ENCODE measurements at regions of chr16 and their contacts with region 1.

Region 1: DNA sequence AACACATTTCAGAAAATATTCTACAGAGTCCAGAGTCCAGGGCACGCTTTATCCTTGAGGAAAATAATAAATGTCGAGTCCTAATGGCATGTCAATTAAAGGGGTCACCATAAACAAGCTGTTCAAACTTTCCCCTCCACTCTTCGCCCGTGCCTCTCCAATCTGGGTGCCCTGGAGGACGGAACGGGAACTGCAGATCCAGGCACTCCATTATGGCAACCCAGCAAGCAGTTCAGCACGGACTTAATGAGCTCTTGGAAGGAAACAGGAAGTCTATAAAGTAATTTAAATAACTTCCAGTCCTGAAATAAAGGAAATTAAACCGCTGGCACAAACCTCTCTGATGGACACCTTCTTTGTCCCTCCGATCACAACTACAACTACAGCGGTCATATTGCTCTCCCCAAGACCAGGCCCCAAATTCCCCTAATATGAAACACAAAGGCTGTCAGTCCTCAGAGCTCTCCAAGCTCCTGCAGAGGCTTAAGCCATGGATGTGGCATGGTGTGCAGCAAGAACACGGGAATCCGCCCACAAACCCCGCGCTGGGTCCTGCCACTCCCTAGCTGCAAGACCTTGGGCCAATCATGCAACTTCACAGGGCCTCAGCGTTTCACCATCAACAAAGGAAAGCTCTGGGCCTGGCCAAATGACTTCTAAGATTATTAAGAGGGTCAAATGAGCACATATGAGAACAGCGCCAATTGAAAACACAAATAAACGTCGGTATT is 52.6 kb downstream of the ZFHX3 start:
- DNase-seq: peak; percentile 23 to 87
- H3K4me3 ChIP-seq: no peak overlapping the region
- H3K27ac ChIP-seq: no peak overlapping the region
- H3K4me1 ChIP-seq: peaks cover 2 to 11% (median 6%) of the 10 kb centered on the region in 4 experiments; a peak in 6 of 7 replicates
- H3K27me3 ChIP-seq: no peaks in the 10 kb centered on the region
- CTCF ChIP-seq: peak; percentile 48 to 81 (median 77)
- EP300 ChIP-seq: no peak
- POLR2A ChIP-seq: no peak
- RAD21 ChIP-seq: peak; percentile 35 to 48; a peak in 2 of 4 replicates

Region 2: GRCh38 chr16:72952811-72953595 is 42.3 kb before region 1 on chr16:
- CTCF ChIA-PET with region 1: interaction called, 14 read pairs
- POLR2A ChIA-PET with region 1: no interaction called
- DNase-seq: no peak
- H3K4me3 ChIP-seq: no peak overlapping the region
- H3K27ac ChIP-seq: no peak overlapping the region
- H3K4me1 ChIP-seq: peaks cover 0 to 1% (median 0%) of the 10 kb centered on the region in 4 experiments; a peak in 1 of 7 replicates
- H3K27me3 ChIP-seq: no peaks in the 10 kb centered on the region; a peak in 1 of 7 replicates
- CTCF ChIP-seq: no peak
- EP300 ChIP-seq: no peak
- POLR2A ChIP-seq: no peak
- RAD21 ChIP-seq: no peak

Region 3: DNA sequence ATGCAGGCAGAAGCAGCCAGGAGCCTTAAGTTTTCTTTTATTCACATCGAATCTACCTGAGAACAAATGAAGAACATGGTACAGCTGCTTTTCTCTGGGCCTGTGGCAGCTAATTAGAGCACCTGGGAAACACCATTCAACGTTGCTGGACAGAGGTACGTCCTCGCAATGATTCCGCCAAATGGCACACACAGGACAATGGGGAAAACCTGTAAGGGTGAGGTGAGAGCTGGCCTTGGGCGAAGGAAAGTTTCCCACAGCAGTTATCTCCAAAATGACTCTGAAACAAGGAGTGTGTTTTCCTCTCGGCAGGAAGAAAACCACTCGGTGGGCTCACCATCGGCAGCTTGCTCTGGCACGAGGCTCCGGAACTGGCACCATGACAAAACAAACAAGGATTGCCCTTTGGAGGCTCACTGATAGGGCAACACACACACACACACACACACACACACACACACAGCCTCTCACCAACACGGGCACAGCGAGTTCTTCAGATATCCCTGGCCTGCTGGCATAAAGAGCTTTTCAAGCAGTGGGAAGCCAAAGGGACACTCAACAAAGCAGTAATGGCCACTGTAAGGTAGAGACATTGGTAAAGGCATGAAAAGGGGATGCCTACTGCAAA is 21.1 kb before region 1 on chr16:
- CTCF ChIA-PET with region 1: interaction called, 86 read pairs
- POLR2A ChIA-PET with region 1: no interaction called
- DNase-seq: no peak
- H3K4me3 ChIP-seq: no peak overlapping the region
- H3K27ac ChIP-seq: no peak overlapping the region
- H3K4me1 ChIP-seq: no peaks in the 10 kb centered on the region
- H3K27me3 ChIP-seq: no peaks in the 10 kb centered on the region
- CTCF ChIP-seq: no peak
- EP300 ChIP-seq: no peak
- POLR2A ChIP-seq: no peak
- RAD21 ChIP-seq: no peak

Region 4: GRCh38 chr16:73020362-73020884 is 25.1 kb after region 1 on chr16:
- CTCF ChIA-PET with region 1: interaction called, 38 read pairs
- POLR2A ChIA-PET with region 1: no interaction called
- DNase-seq: no peak
- H3K4me3 ChIP-seq: no peak overlapping the region
- H3K27ac ChIP-seq: no peak overlapping the region
- H3K4me1 ChIP-seq: no peaks in the 10 kb centered on the region; a peak in 1 of 7 replicates
- H3K27me3 ChIP-seq: peaks cover 0 to 34% (median 18%) of the 10 kb centered on the region in 4 experiments; a peak in 6 of 7 replicates
- CTCF ChIP-seq: no peak
- EP300 ChIP-seq: no peak
- POLR2A ChIP-seq: no peak
- RAD21 ChIP-seq: no peak

Region 5: DNA sequence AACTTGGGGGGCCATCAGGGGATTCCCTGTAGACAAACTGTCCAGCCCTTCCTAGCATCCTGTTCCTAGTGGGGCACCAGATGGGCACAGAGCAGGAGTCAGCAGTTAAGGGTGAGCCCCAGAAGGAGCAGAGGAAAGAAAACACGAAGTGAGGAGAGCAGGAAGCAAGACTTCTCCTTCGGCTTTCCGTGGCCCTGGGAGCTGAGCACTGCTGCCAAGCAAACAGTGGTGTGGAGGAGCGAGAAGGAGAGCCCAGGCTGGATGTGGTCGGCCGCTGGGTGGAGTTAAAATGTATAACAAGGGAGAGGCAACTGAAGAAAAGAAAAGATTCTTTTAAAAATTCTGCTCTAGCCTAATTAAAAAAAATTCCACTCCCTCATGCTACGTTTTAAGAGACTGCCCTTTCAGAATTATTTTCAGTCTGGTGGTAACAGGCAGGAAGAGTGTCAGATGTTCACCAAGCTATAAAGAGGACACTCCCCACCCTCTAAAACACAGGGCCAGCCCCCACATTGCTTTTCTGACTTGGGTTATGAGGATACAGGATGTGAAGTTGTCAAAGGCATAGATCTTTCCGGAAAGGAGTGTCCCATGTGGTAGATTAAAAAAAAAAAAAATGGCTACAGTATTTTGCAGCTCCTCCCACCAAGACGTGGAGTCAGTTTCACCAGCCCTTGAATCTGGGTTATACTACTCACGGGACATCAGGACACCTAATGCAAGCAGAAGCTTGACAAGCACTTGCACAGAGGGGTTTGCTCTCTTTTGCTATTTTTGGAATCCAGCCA is 127.5 kb after region 1 on chr16:
- CTCF ChIA-PET with region 1: no interaction called
- POLR2A ChIA-PET with region 1: no interaction called
- DNase-seq: no peak
- H3K4me3 ChIP-seq: no peak overlapping the region
- H3K27ac ChIP-seq: no peak overlapping the region
- H3K4me1 ChIP-seq: no peaks in the 10 kb centered on the region
- H3K27me3 ChIP-seq: no peaks in the 10 kb centered on the region
- CTCF ChIP-seq: no peak
- EP300 ChIP-seq: no peak
- POLR2A ChIP-seq: no peak
- RAD21 ChIP-seq: no peak